A549 (cell line): ENCODE measurements at regions of chr6 and their contacts with region 1.

Region 1: GRCh38 chr6:25257686-25258348 is 21.4 kb upstream of the CARMIL1 start:
- DNase-seq: no peak
- ATAC-seq: no peak
- H3K4me3 ChIP-seq: no peak overlapping the region
- H3K27ac ChIP-seq: no peak overlapping the region
- H3K4me1 ChIP-seq: no peaks in the 10 kb centered on the region
- CTCF ChIP-seq: no peak
- EP300 ChIP-seq: no peak
- POLR2A ChIP-seq: no peak
- RAD21 ChIP-seq: no peak

Region 2: DNA sequence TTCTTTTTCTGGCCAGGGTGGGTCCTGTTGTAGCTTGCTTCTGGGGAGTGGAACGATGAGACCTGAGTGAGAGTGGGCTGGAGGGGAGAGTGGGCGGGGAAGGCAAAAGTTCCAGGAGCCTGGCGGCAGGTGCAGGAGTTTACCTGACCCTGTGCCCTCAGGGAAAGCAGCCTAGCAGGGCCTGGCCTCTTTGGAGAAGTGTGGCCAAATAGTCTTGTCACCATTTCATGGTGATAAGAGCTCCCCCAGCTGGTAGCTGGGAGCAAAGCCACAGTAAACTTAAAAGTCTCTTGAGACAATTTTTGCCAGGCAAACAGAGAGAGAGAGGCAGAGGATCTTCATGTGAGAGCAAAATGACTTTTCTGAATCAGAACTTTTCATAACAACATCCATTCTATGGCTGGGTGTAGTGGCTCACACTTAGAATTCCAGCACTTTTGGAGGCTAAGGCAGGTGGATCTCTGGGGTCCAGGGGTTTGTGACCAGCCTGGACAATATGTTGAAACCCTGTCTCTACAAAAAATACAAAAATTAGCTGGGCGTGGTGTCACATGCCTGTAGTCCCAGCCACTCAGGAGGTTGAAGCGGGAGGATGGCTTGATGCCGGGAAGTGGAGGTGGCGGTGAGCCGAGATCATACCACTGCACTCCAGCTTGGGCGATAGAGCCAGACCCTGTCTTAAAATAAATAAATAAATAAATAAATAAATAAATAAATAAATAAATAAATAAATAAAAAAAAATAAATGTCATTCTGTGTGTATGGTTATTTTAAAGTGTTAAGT is 232.4 kb after region 1 on chr6:
- CTCF ChIA-PET with region 1: interaction called, 11 read pairs
- POLR2A ChIA-PET with region 1: no interaction called
- DNase-seq: peak; percentile 31 to 74
- ATAC-seq: peak; percentile 95 to 96
- H3K4me3 ChIP-seq: no peak overlapping the region
- H3K27ac ChIP-seq: peak overlapping the region in 1 of 2 experiments; percentile 66; a peak in 2 of 6 replicates
- H3K4me1 ChIP-seq: peaks cover 3% of the 10 kb centered on the region; the same call in 1 of the 3 replicates
- CTCF ChIP-seq: peak; percentile 74
- EP300 ChIP-seq: no peak
- POLR2A ChIP-seq: no peak
- RAD21 ChIP-seq: peak; percentile 81 to 82

Region 3: GRCh38 chr6:25519856-25520255 is 262.0 kb after region 1 on chr6:
- CTCF ChIA-PET with region 1: no interaction called
- POLR2A ChIA-PET with region 1: no interaction called
- DNase-seq: no peak
- ATAC-seq: no peak
- H3K4me3 ChIP-seq: no peak overlapping the region
- H3K27ac ChIP-seq: no peak overlapping the region
- H3K4me1 ChIP-seq: no peaks in the 10 kb centered on the region
- CTCF ChIP-seq: no peak
- EP300 ChIP-seq: no peak
- POLR2A ChIP-seq: no peak
- RAD21 ChIP-seq: no peak